ENCODE measurements at regions of chr6 and their contacts with region 1.

Region 1: DNA sequence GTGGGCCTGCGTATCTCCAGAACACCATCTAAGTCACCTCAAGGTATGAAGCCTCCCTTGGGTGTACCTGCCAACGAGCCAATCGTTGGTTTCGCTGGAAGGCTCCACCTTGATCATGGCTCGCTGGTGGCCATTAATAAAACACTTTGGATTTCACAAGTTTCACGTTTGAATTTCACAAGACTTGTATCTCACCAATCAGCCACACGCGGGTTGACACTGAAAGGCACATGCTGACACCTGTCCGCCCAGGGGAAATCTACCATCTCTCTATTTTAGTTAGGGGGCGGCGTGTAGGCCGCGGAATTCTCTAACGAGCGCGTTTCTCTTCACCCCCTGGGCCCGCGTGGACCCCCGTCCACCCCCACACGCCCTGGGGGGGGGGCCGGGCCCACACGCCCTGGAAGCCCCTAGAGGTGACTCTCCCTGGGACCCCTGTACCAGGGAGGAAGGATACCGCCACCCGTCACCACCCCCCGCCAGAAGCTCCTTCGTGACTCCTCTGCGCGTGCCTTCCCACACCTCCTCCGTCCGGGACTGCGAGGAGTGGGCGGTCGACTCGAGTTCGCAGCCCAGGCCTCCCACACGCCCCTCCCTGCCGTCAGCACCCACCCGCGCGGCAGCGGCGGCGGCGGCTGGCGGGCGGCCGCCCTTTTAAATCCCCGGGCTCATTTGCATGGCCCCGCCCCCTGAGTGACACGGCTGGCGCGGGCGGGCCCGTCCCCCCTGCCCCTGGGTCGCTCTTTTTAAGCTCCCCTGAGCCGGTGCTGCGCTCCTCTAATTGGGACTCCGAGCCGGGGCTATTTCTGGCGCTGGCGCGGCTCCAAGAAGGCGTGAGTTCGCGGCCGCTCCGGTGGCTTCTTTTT is at the start of gene HMGA1:
- DNase-seq: peak; percentile 85 to 86
- H3K4me3 ChIP-seq: peak within 1 kb of the TSS; percentile 66
- H3K4me3 Mint-ChIP-seq: peak within 1 kb of the TSS; percentile 71
- H3K27ac Mint-ChIP-seq: peak within 1 kb of the TSS; percentile 67
- H3K4me1 ChIP-seq: peaks cover 29% of the 10 kb centered on the region
- H3K4me1 Mint-ChIP-seq: no peaks in the 10 kb centered on the region
- H3K27me3 ChIP-seq: no peaks in the 10 kb centered on the region
- H3K27me3 Mint-ChIP-seq: no peaks in the 10 kb centered on the region
- CTCF ChIP-seq: no peak
- total RNA-seq, gene HMGA1: 301 and 322 TPM in 2 replicates

Region 2: GRCh38 chr6:34223956-34224940 is 12.1 kb before region 1 on chr6:
- CTCF ChIA-PET with region 1: no interaction called
- POLR2A ChIA-PET with region 1: interaction called, 23 read pairs
- intact Hi-C with region 1: no loop called
- DNase-seq: peak; percentile 85 to 89
- H3K4me3 ChIP-seq: peak overlapping the region; percentile 66
- H3K4me3 Mint-ChIP-seq: peak overlapping the region; percentile 64
- H3K27ac Mint-ChIP-seq: peak overlapping the region; percentile 81
- H3K4me1 ChIP-seq: 0 out of 2 replicates have a peak, but pooled peaks cover 5% of the 10 kb centered on the region
- H3K4me1 Mint-ChIP-seq: peaks cover 7% of the 10 kb centered on the region
- H3K27me3 ChIP-seq: no peaks in the 10 kb centered on the region
- H3K27me3 Mint-ChIP-seq: no peaks in the 10 kb centered on the region
- CTCF ChIP-seq: no peak

Region 3: GRCh38 chr6:34248727-34249551 is 12.6 kb after region 1 on chr6 and contains the start of gene SMIM29:
- CTCF ChIA-PET with region 1: interaction called, 11 read pairs
- POLR2A ChIA-PET with region 1: interaction called, 7 read pairs
- intact Hi-C with region 1: no loop called
- DNase-seq: peak; percentile 95 to 97
- H3K4me3 ChIP-seq: peak within 1 kb of the TSS; percentile 85
- H3K4me3 Mint-ChIP-seq: peak within 1 kb of the TSS; percentile 87
- H3K27ac Mint-ChIP-seq: peak within 1 kb of the TSS; percentile 89
- H3K4me1 ChIP-seq: peaks cover 8% of the 10 kb centered on the region; the same call in 1 of the 2 replicates
- H3K4me1 Mint-ChIP-seq: peaks cover 7% of the 10 kb centered on the region
- H3K27me3 ChIP-seq: no peaks in the 10 kb centered on the region
- H3K27me3 Mint-ChIP-seq: no peaks in the 10 kb centered on the region
- CTCF ChIP-seq: peak; percentile 77 to 95
- total RNA-seq, gene SMIM29: 14.3 and 16.0 TPM in 2 replicates

Region 4: DNA sequence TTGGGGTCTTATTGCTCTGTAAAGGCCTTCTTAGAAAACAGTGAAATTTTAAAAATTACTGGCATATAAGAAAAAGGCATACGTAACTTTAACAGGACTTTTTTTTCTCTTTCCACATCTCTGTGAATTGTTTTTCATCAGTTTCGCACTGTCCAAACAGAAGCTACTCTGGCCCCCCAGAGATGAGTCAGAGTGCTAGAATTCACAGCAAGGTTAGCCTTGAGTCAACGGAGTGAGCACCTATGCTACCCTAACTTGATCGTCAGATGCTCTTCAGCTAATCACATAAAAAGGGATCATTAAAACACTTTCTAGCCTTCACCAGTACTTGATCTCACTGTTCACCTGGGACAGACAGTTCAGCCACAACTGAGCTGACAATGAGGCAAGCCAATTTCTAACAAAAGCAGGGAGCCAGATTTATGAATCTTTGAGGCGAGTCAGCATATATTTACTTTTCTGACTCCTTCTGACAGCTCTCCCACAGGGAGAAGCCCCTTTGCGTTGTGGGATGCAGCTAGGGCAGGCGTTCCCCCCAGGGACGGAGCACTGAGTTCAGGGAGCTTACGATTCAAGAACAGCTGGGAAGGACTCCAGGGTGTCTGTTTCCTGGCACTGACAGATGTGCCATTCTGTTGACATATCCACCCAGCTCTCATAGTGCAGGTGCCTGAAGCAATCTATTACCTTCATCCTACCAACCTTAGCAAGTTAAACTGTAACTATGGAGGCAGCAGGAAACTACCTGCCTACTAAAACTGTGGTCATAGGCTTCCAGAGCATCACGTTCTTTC is 366.2 kb after region 1 on chr6:
- CTCF ChIA-PET with region 1: no interaction called
- POLR2A ChIA-PET with region 1: interaction called, 10 read pairs
- intact Hi-C with region 1: loop called (anchors 10 kb)
- DNase-seq: peak in 1 of 2 experiments; percentile 29
- H3K4me3 ChIP-seq: no peak overlapping the region
- H3K4me3 Mint-ChIP-seq: peak overlapping the region; percentile 43
- H3K27ac Mint-ChIP-seq: peak overlapping the region; percentile 54
- H3K4me1 ChIP-seq: peaks cover 59% of the 10 kb centered on the region
- H3K4me1 Mint-ChIP-seq: peaks cover 29% of the 10 kb centered on the region
- H3K27me3 ChIP-seq: no peaks in the 10 kb centered on the region
- H3K27me3 Mint-ChIP-seq: no peaks in the 10 kb centered on the region
- CTCF ChIP-seq: no peak